Activated T-helper 1 cell treated with anti-CD3 and anti-CD28 coated beads, Interleukin-12 subunit alpha, Interleukin-12 subunit beta, Interleukin-2, Interleukin-4 antibody, amounts not matched to agents 30 ng/mL and 10 ng/mL and 1 ng/mL, durations not matched to agents 14 hours and 24 hours and 36 hours (primary cell): ENCODE measurements at regions of chr3 and their contacts with region 1.

Region 1: GRCh38 chr3:40179016-40179415 is 130.5 kb upstream of the EIF1B start:
- DNase-seq: peak; percentile 12
- H3K4me3 Mint-ChIP-seq: no peak overlapping the region
- H3K27ac Mint-ChIP-seq: no peak overlapping the region
- H3K4me1 Mint-ChIP-seq: no peaks in the 10 kb centered on the region
- H3K27me3 Mint-ChIP-seq: peaks cover 6% of the 10 kb centered on the region

Region 2: DNA sequence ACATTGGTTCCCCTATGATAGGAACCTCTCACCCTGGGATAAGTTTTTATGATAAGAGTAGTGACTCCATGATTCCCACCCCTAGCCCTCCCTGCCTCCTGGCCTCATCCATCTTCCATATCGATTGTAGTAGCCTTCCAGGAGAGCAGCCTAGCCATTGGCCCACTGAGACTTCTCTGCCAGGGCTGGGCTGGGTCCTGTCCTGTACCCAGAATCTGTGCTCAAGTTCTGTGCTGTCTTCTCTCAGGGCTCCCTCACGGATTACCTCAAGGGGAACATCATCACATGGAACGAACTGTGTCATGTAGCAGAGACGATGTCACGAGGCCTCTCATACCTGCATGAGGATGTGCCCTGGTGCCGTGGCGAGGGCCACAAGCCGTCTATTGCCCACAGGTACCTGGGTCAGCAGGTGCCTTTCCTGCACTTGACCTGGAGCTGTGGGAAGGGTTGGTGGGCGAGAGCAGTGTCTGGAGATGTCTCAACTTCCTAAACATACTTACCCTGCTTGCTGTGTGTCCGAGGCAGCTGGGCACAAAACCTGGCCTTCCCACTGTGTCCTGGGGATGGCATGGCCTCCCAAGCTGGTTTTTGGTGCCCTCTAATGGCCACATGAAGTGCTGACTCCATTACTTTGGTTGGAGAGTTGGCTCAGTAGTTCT is 1699.5 kb before region 1 on chr3:
- intact Hi-C with region 1: no loop called
- DNase-seq: peak; percentile 21
- H3K4me3 Mint-ChIP-seq: no peak overlapping the region
- H3K27ac Mint-ChIP-seq: no peak overlapping the region
- H3K4me1 Mint-ChIP-seq: no peaks in the 10 kb centered on the region
- H3K27me3 Mint-ChIP-seq: no peaks in the 10 kb centered on the region

Region 3: GRCh38 chr3:39668420-39668819 is 510.6 kb before region 1 on chr3:
- intact Hi-C with region 1: loop called (anchors 2 kb)
- DNase-seq: no peak
- H3K4me3 Mint-ChIP-seq: no peak overlapping the region
- H3K27ac Mint-ChIP-seq: no peak overlapping the region
- H3K4me1 Mint-ChIP-seq: no peaks in the 10 kb centered on the region
- H3K27me3 Mint-ChIP-seq: peaks cover 4% of the 10 kb centered on the region

Region 4: DNA sequence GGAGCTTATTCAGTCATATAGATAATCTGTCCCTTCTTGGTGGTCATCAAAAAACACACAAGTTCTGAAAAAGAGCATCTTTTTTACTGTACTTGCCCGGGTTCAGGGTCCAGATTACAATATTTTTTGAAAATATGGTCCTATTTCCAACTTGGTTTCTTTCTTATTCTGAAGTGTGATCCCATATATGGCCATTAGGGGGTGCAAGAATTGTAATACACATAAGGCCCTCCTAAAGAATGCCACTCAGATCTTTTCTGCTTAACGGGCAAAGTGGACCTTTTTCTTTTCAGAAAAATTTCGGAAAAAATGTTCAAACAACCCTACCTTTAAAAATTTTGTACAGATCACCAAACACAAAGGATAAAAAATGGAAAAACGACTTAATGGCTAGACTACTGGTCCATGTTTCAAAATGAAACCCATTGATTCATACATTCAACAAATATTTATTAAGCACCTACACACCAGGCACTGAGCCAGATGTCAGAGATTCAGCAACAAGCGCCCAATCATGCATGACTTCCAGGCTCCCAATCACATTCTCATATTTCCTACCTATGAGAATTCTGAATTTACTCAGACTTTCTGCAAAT is 471.6 kb before region 1 on chr3:
- intact Hi-C with region 1: loop called (anchors 2 kb)
- DNase-seq: no peak
- H3K4me3 Mint-ChIP-seq: no peak overlapping the region
- H3K27ac Mint-ChIP-seq: no peak overlapping the region
- H3K4me1 Mint-ChIP-seq: no peaks in the 10 kb centered on the region
- H3K27me3 Mint-ChIP-seq: peaks cover 9% of the 10 kb centered on the region

Region 5: DNA sequence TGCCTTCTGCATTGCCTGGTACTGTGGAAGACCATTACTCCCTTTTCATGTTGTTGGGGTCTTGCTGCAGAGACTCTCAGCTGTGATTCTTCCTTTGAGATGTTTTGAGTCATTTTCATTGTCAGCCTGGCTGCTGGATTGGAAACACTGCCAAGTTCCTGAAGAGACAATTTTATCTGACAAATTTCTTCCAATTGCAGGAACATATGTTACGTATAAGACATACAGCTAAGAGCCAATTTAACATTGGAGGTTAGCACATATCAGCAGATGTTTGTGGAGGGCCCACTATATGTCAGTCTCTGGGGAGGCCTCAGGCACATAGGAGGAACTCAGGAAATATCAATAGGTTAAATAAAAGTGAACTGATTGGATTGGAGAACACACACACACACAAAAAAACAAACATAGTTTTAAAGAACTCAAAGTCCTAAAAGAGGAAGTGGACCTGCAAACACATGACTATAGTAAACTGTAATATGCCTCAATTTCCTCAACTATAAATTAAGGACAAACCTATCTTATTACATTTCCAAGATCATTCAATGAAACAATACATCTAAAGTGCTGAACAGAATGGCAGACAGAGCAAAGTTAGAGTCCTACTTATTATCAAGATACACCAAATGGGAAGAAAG is 197.3 kb before region 1 on chr3:
- intact Hi-C with region 1: loop called (anchors 5 kb)
- DNase-seq: no peak
- H3K4me3 Mint-ChIP-seq: no peak overlapping the region
- H3K27ac Mint-ChIP-seq: no peak overlapping the region
- H3K4me1 Mint-ChIP-seq: no peaks in the 10 kb centered on the region
- H3K27me3 Mint-ChIP-seq: no peaks in the 10 kb centered on the region